Mammary epithelial cell (primary cell): ENCODE measurements at regions of chr7 and their contacts with region 1.

Region 1: DNA sequence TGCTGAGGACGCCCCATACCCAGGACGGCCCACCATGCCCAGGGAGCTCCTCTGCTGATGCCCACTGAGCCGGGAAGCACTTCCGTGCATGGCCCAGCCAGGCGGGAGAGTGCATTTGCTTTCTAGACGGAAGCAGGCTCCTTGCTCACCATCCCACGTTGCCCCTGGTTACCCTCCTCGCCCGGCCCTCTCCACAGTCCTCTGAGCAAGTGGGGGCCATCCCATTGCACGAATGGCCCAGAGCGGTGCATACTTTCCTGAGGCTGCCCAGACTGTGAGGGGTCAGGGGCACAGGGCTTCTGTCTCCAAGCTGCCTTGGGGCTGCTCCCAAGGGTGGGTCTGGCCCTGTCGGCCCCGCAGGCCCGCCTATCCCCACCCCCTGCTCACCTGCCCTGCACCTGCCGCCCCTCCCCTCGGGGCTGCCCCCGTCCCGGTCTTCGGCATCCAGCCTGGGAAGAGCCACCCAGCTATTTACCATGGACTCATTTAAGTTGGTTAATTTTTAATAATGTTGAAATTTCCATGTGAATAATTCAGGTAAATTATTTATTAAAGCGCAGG is 104.5 kb downstream of the MICALL2 start:
- DNase-seq: no peak
- H3K4me3 ChIP-seq: no peak overlapping the region
- H3K27ac ChIP-seq: no peak overlapping the region
- H3K4me1 ChIP-seq: no peaks in the 10 kb centered on the region
- H3K27me3 ChIP-seq: peaks cover 5% of the 10 kb centered on the region
- CTCF ChIP-seq: no peak

Region 2: DNA sequence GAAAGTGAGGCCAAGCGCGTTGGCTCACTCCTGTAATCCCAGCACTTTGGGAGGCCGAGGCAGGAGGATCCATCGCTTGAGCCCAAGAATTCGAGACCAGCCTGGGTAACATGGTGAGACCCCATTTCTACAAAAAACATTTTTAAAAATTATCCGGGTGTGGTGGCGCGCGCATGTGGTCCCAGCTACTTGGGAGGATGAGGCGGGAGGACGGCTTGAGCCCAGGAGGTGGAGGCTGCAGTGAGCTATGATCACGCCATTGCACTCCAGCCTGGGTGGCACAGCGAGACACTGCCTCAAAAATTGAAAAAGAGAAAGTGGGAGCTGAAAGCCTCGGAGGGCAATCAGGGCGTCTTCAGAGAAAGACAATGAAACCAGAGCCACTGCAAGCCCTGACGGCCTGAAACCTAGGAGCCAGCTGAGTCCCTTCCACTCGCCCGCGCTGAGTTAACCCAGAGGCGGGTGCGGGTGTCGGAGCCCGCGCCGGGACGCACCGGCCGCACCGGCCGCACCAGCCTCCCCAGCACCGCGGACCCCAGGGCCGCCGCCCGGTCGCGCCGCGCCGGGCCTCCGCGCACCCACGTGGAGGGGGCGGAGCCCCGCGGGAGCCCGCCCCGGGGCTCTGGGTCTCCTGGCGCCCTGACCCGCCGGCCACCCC is 217.1 kb before region 1 on chr7:
- CTCF ChIA-PET with region 1: no interaction called
- dilution Hi-C with region 1: no loop called
- in situ Hi-C with region 1: no loop called
- intact Hi-C with region 1: no loop called
- DNase-seq: peak; percentile 21
- H3K4me3 ChIP-seq: peak overlapping the region; percentile 79 to 90 (median 89)
- H3K27ac ChIP-seq: peak overlapping the region; percentile 93
- H3K4me1 ChIP-seq: peaks cover 6% of the 10 kb centered on the region
- H3K27me3 ChIP-seq: no peaks in the 10 kb centered on the region
- CTCF ChIP-seq: no peak

Region 3: GRCh38 chr7:1386623-1387220 is 32.0 kb after region 1 on chr7:
- CTCF ChIA-PET with region 1: no interaction called
- dilution Hi-C with region 1: loop called (anchors 5 kb)
- in situ Hi-C with region 1: no loop called
- intact Hi-C with region 1: no loop called
- DNase-seq: no peak
- H3K4me3 ChIP-seq: no peak overlapping the region
- H3K27ac ChIP-seq: no peak overlapping the region
- H3K4me1 ChIP-seq: no peaks in the 10 kb centered on the region
- H3K27me3 ChIP-seq: peaks cover 10% of the 10 kb centered on the region
- CTCF ChIP-seq: no peak